ENCODE measurements at regions of chrX and their contacts with region 1.

Region 1: DNA sequence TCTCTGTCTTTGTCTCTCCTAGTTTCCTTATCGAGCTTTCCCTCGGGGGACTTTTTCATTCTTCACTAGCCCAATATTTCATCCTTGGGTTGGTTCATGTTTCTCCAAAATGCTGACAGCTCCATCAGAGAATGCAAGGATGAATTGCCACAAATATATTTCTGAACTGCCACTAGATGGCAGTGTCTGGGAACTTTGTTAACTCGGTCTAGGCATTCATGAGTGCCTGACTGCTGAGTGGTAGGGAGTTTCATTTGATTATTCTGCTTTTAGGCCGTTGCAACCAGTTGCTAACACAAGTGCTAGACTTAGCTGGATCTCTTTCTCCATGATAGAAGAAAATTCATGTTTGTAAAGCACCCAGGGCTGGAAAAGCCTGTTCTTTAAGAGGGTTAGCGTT is 73.5 kb upstream of the RAP2C start:
- DNase-seq: peak; percentile 24
- ATAC-seq: peak; percentile 81
- H3K4me3 ChIP-seq: no peak overlapping the region
- H3K27ac ChIP-seq: no peak overlapping the region
- H3K4me1 ChIP-seq: no peaks in the 10 kb centered on the region
- H3K27me3 ChIP-seq: no peaks in the 10 kb centered on the region
- CTCF ChIP-seq: peak; percentile 75

Region 2: GRCh38 chrX:132443161-132444135 is 150.7 kb after region 1 on chrX:
- CTCF ChIA-PET with region 1: interaction called, 12 read pairs
- POLR2A ChIA-PET with region 1: no interaction called
- in situ Hi-C with region 1: no loop called
- intact Hi-C with region 1: no loop called
- DNase-seq: no peak
- ATAC-seq: no peak
- H3K4me3 ChIP-seq: no peak overlapping the region
- H3K27ac ChIP-seq: no peak overlapping the region
- H3K4me1 ChIP-seq: no peaks in the 10 kb centered on the region
- H3K27me3 ChIP-seq: no peaks in the 10 kb centered on the region
- CTCF ChIP-seq: no peak

Region 3: DNA sequence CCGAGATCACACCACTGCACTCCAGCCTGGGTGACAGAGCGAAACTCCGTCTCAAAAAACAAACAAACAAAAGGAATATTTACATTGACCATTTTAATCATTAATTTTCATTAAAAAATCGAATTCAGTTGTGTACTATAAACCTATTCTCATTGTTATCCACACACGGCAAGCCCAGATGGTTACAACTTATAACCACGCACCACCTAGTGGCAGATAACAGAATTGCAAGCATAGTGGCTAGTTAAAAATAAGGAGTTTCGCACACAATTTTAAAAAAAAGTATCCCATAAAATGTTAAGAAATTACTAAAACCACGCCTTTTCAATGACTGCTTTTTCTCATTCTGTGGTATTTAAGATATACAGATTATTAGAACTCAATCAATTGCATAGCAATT is 170.6 kb after region 1 on chrX:
- CTCF ChIA-PET with region 1: interaction called, 4 read pairs
- POLR2A ChIA-PET with region 1: no interaction called
- in situ Hi-C with region 1: no loop called
- intact Hi-C with region 1: loop called (anchors 2 kb)
- DNase-seq: no peak
- ATAC-seq: no peak
- H3K4me3 ChIP-seq: no peak overlapping the region
- H3K27ac ChIP-seq: no peak overlapping the region
- H3K4me1 ChIP-seq: no peaks in the 10 kb centered on the region
- H3K27me3 ChIP-seq: 0 out of 2 replicates have a peak, but pooled peaks cover 1% of the 10 kb centered on the region
- CTCF ChIP-seq: peak; percentile 72

Region 4: GRCh38 chrX:132615391-132616131 is 322.8 kb after region 1 on chrX:
- CTCF ChIA-PET with region 1: no interaction called
- POLR2A ChIA-PET with region 1: no interaction called
- in situ Hi-C with region 1: no loop called
- intact Hi-C with region 1: loop called (anchors 2 kb)
- DNase-seq: no peak
- ATAC-seq: peak; percentile 68; the same call in 1 of the 2 replicates
- H3K4me3 ChIP-seq: no peak overlapping the region
- H3K27ac ChIP-seq: no peak overlapping the region
- H3K4me1 ChIP-seq: no peaks in the 10 kb centered on the region
- H3K27me3 ChIP-seq: peaks cover 2% of the 10 kb centered on the region; the same call in 1 of the 2 replicates
- CTCF ChIP-seq: peak; percentile 66

Region 5: DNA sequence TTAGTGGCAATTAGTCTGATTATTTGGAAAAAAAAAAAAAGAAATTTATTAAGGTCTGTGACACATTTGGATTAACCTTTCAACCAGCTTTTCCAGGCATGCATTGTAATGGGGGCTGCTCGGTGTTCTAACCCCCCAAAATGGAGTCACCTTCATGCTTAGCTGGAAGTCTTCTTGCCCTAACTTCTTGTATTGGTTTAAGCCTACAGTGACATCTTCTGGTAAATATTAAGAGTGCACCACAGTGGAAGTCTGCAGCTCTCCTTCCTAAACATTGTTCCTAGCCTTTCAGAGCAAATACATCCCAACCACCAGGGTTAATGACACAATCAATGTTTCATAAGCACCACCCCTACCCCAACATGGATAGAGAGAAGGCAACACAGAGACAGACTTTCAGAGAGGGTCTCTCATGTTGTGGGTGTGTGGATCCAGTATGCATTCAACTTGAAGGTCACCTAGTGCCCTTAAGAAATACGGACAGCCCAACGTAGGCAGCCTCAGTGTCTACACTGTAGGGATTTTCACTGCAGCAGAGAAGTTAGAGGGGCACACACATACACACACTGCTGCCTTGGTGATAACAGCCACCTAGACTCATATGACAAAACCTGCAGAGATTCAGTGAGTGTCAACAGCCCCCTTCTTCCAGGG is 338.9 kb after region 1 on chrX:
- CTCF ChIA-PET with region 1: interaction called, 10 read pairs
- POLR2A ChIA-PET with region 1: no interaction called
- in situ Hi-C with region 1: no loop called
- intact Hi-C with region 1: no loop called
- DNase-seq: peak; percentile 30
- ATAC-seq: peak; percentile 81
- H3K4me3 ChIP-seq: no peak overlapping the region
- H3K27ac ChIP-seq: no peak overlapping the region
- H3K4me1 ChIP-seq: no peaks in the 10 kb centered on the region
- H3K27me3 ChIP-seq: peaks cover 20% of the 10 kb centered on the region
- CTCF ChIP-seq: peak; percentile 75

Region 6: GRCh38 chrX:132664269-132664668 is 371.5 kb after region 1 on chrX:
- CTCF ChIA-PET with region 1: no interaction called
- POLR2A ChIA-PET with region 1: no interaction called
- in situ Hi-C with region 1: no loop called
- intact Hi-C with region 1: no loop called
- DNase-seq: no peak
- ATAC-seq: no peak
- H3K4me3 ChIP-seq: no peak overlapping the region
- H3K27ac ChIP-seq: no peak overlapping the region
- H3K4me1 ChIP-seq: no peaks in the 10 kb centered on the region
- H3K27me3 ChIP-seq: no peaks in the 10 kb centered on the region; the same call in 1 of the 2 replicates
- CTCF ChIP-seq: no peak